ENCODE measurements at regions of chr9 and their contacts with region 1.

Region 1: DNA sequence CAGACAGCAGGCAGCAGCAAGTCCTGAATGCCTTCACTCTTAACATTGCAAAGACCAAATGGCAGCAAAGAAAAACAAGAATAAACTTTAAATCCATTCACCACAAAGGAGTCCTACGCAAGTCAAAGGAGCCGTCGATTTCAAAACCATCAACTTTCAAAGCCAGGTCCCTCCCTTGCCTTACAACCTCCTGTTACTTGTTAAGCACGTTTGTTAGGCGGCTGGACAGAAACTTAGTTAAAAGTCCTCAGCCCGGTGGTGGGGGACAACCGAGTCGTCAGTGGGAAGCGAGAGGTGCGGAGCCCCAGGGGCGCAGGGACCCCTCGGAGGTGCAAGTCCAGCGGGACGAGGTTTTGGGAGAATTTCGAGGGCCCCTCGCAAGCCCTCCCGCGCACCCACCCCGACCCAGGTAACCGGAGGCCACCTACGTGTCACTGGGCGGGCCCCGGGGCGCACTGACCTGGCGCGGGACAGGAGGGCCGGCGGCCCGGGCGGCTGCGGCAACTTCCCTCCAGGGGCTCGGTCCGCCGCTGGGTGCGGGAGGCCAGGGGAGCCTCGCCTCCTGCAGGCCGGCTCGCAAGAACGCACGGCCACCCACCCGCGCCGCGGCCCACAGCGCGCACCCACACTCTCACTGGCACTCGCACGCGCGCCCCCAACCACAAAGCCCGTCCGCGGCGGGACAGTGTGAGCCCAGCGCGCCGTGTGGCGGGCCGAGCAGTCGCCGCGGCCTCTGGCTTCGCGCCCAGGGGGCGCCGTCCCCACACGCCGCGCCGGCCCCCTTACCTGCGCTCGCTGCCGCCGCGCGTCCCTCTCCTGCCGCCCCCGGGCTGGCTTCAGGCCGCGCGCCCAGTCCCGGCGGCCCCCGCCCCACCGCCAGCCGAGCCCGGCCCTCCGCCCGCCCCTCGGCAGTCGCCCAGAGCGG is 627 bp downstream of the LPAR1 start:
- DNase-seq: peak; percentile 37
- ATAC-seq: peak; percentile 4
- H3K4me3 ChIP-seq: peak overlapping the region; percentile 90
- H3K27ac ChIP-seq: peak overlapping the region; percentile 97
- H3K4me1 ChIP-seq: peaks cover 8% of the 10 kb centered on the region
- H3K27me3 ChIP-seq: no peaks in the 10 kb centered on the region
- CTCF ChIP-seq: peak; percentile 30; the same call in 1 of the 2 replicates
- POLR2A ChIP-seq: no peak
- RAD21 ChIP-seq: peak; percentile 32

Region 2: DNA sequence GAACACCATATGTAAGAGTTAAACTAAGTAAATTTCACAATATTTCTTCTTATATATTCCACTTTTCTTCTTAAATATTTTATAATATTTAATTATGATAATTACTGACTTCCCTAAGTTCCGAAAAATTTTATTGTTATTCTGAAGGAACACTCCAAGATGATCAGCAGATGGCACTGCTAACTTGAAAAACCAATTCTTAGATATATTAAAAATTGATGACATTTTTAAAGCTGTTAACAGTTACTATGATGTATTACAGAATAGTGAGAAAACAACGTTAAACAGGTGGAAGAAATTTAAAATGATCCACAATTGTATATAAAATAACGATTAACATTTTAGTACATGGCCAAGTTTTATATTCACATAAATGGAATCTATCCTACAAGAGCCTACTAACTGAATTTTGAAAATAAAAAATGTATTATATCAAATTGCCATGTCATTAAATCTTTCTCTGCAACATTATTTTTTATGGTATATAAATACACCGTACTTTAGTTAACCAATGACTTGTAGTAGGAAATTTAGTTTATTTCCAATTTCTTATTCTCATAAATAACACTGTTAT is 399.2 kb before region 1 on chr9:
- CTCF ChIA-PET with region 1: interaction called, 5 read pairs
- POLR2A ChIA-PET with region 1: no interaction called
- dilution Hi-C with region 1: no loop called
- in situ Hi-C with region 1: no loop called
- intact Hi-C with region 1: loop called (anchors 5 kb)
- DNase-seq: peak; percentile 54
- ATAC-seq: peak; percentile 72
- H3K4me3 ChIP-seq: no peak overlapping the region
- H3K27ac ChIP-seq: peak overlapping the region; percentile 49; the same call in 1 of the 2 replicates
- H3K4me1 ChIP-seq: peaks cover 6% of the 10 kb centered on the region; the same call in 1 of the 2 replicates
- H3K27me3 ChIP-seq: no peaks in the 10 kb centered on the region
- CTCF ChIP-seq: peak; percentile 57
- POLR2A ChIP-seq: 0 out of 2 replicates have a peak, but pooled peaks have one; percentile 38
- RAD21 ChIP-seq: peak; percentile 77

Region 3: GRCh38 chr9:110744753-110745384 is 292.8 kb before region 1 on chr9:
- CTCF ChIA-PET with region 1: interaction called, 3 read pairs
- POLR2A ChIA-PET with region 1: no interaction called
- dilution Hi-C with region 1: no loop called
- in situ Hi-C with region 1: no loop called
- intact Hi-C with region 1: loop called (anchors 10 kb)
- DNase-seq: peak; percentile 98
- ATAC-seq: peak; percentile 79
- H3K4me3 ChIP-seq: no peak overlapping the region
- H3K27ac ChIP-seq: peak overlapping the region; percentile 100
- H3K4me1 ChIP-seq: peaks cover 17% of the 10 kb centered on the region
- H3K27me3 ChIP-seq: no peaks in the 10 kb centered on the region
- CTCF ChIP-seq: no peak
- POLR2A ChIP-seq: no peak
- RAD21 ChIP-seq: no peak; the same call in 1 of the 2 replicates

Region 4: DNA sequence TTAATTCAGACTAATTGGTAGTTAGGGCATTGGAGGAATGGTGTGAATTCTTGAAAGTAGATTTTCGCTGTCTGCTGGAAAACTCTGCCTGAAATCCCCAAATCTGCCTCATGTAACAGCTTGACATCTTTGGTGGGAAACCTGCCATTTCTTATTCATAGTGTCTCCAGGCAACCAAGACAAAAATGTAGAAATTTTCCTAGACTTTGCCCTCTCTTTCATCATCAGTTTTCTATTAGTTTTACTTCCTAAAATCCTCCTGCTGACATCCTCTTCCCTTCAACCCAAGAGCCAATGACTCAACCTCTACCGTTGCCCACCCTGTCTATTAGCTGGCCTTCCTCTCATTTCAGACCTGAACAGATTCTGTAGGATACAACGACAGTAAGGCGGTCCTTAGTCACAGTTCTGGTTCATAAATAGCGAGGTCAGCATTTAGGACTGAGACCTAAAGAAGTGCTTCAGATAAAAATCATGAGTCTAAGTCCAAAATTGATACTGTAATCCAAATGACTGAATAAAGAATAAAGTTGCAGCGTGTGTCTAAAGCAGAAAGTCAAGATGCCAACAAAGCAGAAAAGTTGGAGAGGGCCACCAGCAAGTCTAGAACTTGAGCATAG is 235.1 kb before region 1 on chr9:
- CTCF ChIA-PET with region 1: no interaction called
- POLR2A ChIA-PET with region 1: interaction called, 11 read pairs
- dilution Hi-C with region 1: no loop called
- in situ Hi-C with region 1: no loop called
- intact Hi-C with region 1: loop called (anchors 5 kb)
- DNase-seq: peak; percentile 65
- ATAC-seq: no peak
- H3K4me3 ChIP-seq: no peak overlapping the region
- H3K27ac ChIP-seq: peak overlapping the region; percentile 81; the same call in 1 of the 2 replicates
- H3K4me1 ChIP-seq: peaks cover 19% of the 10 kb centered on the region
- H3K27me3 ChIP-seq: no peaks in the 10 kb centered on the region
- CTCF ChIP-seq: no peak
- POLR2A ChIP-seq: no peak
- RAD21 ChIP-seq: no peak

Region 5: GRCh38 chr9:110936719-110937452 is 100.8 kb before region 1 on chr9:
- CTCF ChIA-PET with region 1: no interaction called
- POLR2A ChIA-PET with region 1: no interaction called
- dilution Hi-C with region 1: no loop called
- in situ Hi-C with region 1: no loop called
- intact Hi-C with region 1: loop called (anchors 5 kb)
- DNase-seq: peak; percentile 87
- ATAC-seq: peak; percentile 50
- H3K4me3 ChIP-seq: no peak overlapping the region; the same call in 1 of the 2 replicates
- H3K27ac ChIP-seq: peak overlapping the region; percentile 91
- H3K4me1 ChIP-seq: peaks cover 30% of the 10 kb centered on the region
- H3K27me3 ChIP-seq: no peaks in the 10 kb centered on the region
- CTCF ChIP-seq: no peak
- POLR2A ChIP-seq: no peak
- RAD21 ChIP-seq: no peak

Region 6: DNA sequence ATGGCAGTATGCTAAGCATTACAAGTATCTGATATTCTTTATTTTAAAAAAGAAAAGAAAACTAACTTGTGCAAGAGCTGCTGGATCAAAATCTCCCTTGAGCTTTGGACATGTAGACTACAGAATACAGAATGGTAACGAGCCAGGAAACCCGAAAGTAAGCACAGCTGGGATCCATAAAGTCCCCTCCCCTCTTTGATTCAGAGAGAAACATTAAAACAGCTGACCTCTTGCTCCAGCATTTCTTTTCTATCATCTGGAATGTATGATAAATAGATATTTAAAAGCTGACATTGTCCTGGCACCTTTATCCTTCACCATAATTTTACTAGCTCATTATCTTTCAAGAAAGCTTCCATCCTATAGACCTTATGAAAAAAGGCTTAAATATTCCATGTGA is 28.8 kb after region 1 on chr9:
- CTCF ChIA-PET with region 1: no interaction called
- POLR2A ChIA-PET with region 1: no interaction called
- dilution Hi-C with region 1: no loop called
- in situ Hi-C with region 1: no loop called
- intact Hi-C with region 1: no loop called
- DNase-seq: peak; percentile 26
- ATAC-seq: peak; percentile 37
- H3K4me3 ChIP-seq: no peak overlapping the region
- H3K27ac ChIP-seq: peak overlapping the region; percentile 70; the same call in 1 of the 2 replicates
- H3K4me1 ChIP-seq: no peaks in the 10 kb centered on the region; the same call in 1 of the 2 replicates
- H3K27me3 ChIP-seq: peaks cover 3% of the 10 kb centered on the region; the same call in 1 of the 2 replicates
- CTCF ChIP-seq: no peak
- POLR2A ChIP-seq: no peak
- RAD21 ChIP-seq: no peak

Region 7: GRCh38 chr9:111287127-111287526 is 249.5 kb after region 1 on chr9:
- CTCF ChIA-PET with region 1: interaction called, 7 read pairs
- POLR2A ChIA-PET with region 1: interaction called, 16 read pairs
- dilution Hi-C with region 1: no loop called
- in situ Hi-C with region 1: no loop called
- intact Hi-C with region 1: loop called (anchors 1 kb)
- DNase-seq: peak; percentile 82
- ATAC-seq: peak; percentile 88
- H3K4me3 ChIP-seq: no peak overlapping the region
- H3K27ac ChIP-seq: peak overlapping the region; percentile 0; the same call in 1 of the 2 replicates
- H3K4me1 ChIP-seq: peaks cover 6% of the 10 kb centered on the region
- H3K27me3 ChIP-seq: no peaks in the 10 kb centered on the region
- CTCF ChIP-seq: no peak
- POLR2A ChIP-seq: no peak
- RAD21 ChIP-seq: no peak

Region 8: GRCh38 chr9:111356481-111357244 is 319.0 kb after region 1 on chr9:
- CTCF ChIA-PET with region 1: no interaction called
- POLR2A ChIA-PET with region 1: interaction called, 10 read pairs
- dilution Hi-C with region 1: no loop called
- in situ Hi-C with region 1: no loop called
- intact Hi-C with region 1: no loop called
- DNase-seq: peak; percentile 94
- ATAC-seq: peak; percentile 89
- H3K4me3 ChIP-seq: peak overlapping the region; percentile 44
- H3K27ac ChIP-seq: peak overlapping the region; percentile 88
- H3K4me1 ChIP-seq: peaks cover 4% of the 10 kb centered on the region; the same call in 1 of the 2 replicates
- H3K27me3 ChIP-seq: no peaks in the 10 kb centered on the region
- CTCF ChIP-seq: no peak; the same call in 1 of the 2 replicates
- POLR2A ChIP-seq: no peak
- RAD21 ChIP-seq: no peak

Region 9: GRCh38 chr9:111661150-111661801 is 623.6 kb after region 1 on chr9 and contains the start of gene GNG10:
- CTCF ChIA-PET with region 1: no interaction called
- POLR2A ChIA-PET with region 1: no interaction called
- dilution Hi-C with region 1: no loop called
- in situ Hi-C with region 1: no loop called
- intact Hi-C with region 1: no loop called
- DNase-seq: peak; percentile 52
- ATAC-seq: peak; percentile 96
- H3K4me3 ChIP-seq: peak within 1 kb of the TSS; percentile 98
- H3K27ac ChIP-seq: peak within 1 kb of the TSS; percentile 67
- H3K4me1 ChIP-seq: peaks cover 7% of the 10 kb centered on the region
- H3K27me3 ChIP-seq: no peaks in the 10 kb centered on the region
- CTCF ChIP-seq: no peak
- POLR2A ChIP-seq: peak; percentile 62
- RAD21 ChIP-seq: no peak
- total RNA-seq, gene GNG10: 48.8 and 106 TPM in 2 replicates

Region 10: GRCh38 chr9:111743275-111743674 is 705.6 kb after region 1 on chr9:
- CTCF ChIA-PET with region 1: no interaction called
- POLR2A ChIA-PET with region 1: no interaction called
- dilution Hi-C with region 1: no loop called
- in situ Hi-C with region 1: no loop called
- intact Hi-C with region 1: no loop called
- DNase-seq: peak; percentile 86
- ATAC-seq: peak; percentile 92
- H3K4me3 ChIP-seq: no peak overlapping the region
- H3K27ac ChIP-seq: no peak overlapping the region
- H3K4me1 ChIP-seq: peaks cover 5% of the 10 kb centered on the region; the same call in 1 of the 2 replicates
- H3K27me3 ChIP-seq: no peaks in the 10 kb centered on the region
- CTCF ChIP-seq: no peak
- POLR2A ChIP-seq: no peak
- RAD21 ChIP-seq: no peak